Activated B cell treated with CpG ODN at 0.5 μM for 24 hours (primary cell): ENCODE measurements at regions of chr9 and their contacts with region 1.

Region 1: DNA sequence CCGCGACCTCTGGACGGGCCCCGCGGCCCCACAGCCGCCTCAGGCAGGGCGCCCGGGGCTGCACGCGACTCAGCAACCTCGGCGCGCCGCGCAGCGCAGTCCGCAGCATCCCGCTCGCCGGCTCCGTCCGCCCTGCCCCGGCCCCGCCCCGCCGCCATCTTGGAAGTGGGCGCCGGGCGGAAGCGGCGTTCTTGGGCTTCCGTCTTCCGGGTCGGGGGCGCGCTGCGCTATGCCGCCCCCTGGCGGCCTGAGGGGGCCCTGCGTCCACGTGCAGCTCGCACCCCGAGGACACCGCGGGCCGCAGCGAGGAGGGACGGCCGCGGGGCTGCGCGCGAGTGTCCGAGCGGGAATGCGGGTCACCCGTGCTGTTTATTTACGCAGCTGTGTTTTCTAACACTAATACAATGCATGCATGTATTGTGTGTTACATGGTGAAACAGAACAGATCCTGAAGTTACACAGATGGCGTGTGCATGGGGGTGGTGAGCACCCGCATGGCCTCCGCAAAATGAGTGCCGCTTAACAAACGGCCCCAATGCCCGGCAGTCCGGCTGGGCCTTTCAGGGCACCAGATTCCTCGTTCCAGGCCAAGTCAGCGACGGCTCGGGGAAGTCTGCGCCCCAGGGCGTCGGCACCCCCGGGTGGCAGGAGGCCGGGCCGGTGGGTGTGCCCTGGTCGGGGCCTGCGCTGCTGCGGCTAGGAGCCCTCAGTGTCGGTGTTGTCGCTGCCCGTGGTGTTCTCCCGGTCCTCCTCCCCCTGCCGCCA is at the start of gene DNLZ:
- DNase-seq: peak; percentile 90
- ATAC-seq: peak; percentile 69
- H3K4me3 Mint-ChIP-seq: peak within 1 kb of the TSS; percentile 86
- H3K27ac Mint-ChIP-seq: peak within 1 kb of the TSS; percentile 87
- H3K4me1 Mint-ChIP-seq: peaks cover 9% of the 10 kb centered on the region
- H3K27me3 Mint-ChIP-seq: no peaks in the 10 kb centered on the region
- CTCF ChIP-seq: peak; percentile 84
- total RNA-seq, gene DNLZ: 27.1 and 28.9 TPM in 2 replicates

Region 2: GRCh38 chr9:135792268-135793128 is 571.3 kb before region 1 on chr9:
- CTCF ChIA-PET with region 1: no interaction called
- POLR2A ChIA-PET with region 1: no interaction called
- intact Hi-C with region 1: no loop called
- DNase-seq: no peak
- ATAC-seq: no peak
- H3K4me3 Mint-ChIP-seq: no peak overlapping the region
- H3K27ac Mint-ChIP-seq: no peak overlapping the region
- H3K4me1 Mint-ChIP-seq: no peaks in the 10 kb centered on the region
- H3K27me3 Mint-ChIP-seq: peaks cover 3% of the 10 kb centered on the region
- CTCF ChIP-seq: no peak

Region 3: GRCh38 chr9:135898634-135899407 is 465.0 kb before region 1 on chr9:
- CTCF ChIA-PET with region 1: no interaction called
- POLR2A ChIA-PET with region 1: no interaction called
- intact Hi-C with region 1: no loop called
- DNase-seq: no peak
- ATAC-seq: no peak
- H3K4me3 Mint-ChIP-seq: no peak overlapping the region
- H3K27ac Mint-ChIP-seq: no peak overlapping the region
- H3K4me1 Mint-ChIP-seq: peaks cover 40% of the 10 kb centered on the region
- H3K27me3 Mint-ChIP-seq: no peaks in the 10 kb centered on the region
- CTCF ChIP-seq: no peak

Region 4: GRCh38 chr9:136118320-136119060 is 245.3 kb before region 1 on chr9 and contains the start of gene TMEM250:
- CTCF ChIA-PET with region 1: interaction called, 3 read pairs
- POLR2A ChIA-PET with region 1: interaction called, 7 read pairs
- intact Hi-C with region 1: loop called (anchors 1 kb)
- DNase-seq: peak; percentile 96
- ATAC-seq: peak; percentile 89
- H3K4me3 Mint-ChIP-seq: peak within 1 kb of the TSS; percentile 81
- H3K27ac Mint-ChIP-seq: peak within 1 kb of the TSS; percentile 74
- H3K4me1 Mint-ChIP-seq: peaks cover 7% of the 10 kb centered on the region
- H3K27me3 Mint-ChIP-seq: no peaks in the 10 kb centered on the region
- CTCF ChIP-seq: no peak
- total RNA-seq, gene TMEM250: 23.3 and 23.4 TPM in 2 replicates

Region 5: DNA sequence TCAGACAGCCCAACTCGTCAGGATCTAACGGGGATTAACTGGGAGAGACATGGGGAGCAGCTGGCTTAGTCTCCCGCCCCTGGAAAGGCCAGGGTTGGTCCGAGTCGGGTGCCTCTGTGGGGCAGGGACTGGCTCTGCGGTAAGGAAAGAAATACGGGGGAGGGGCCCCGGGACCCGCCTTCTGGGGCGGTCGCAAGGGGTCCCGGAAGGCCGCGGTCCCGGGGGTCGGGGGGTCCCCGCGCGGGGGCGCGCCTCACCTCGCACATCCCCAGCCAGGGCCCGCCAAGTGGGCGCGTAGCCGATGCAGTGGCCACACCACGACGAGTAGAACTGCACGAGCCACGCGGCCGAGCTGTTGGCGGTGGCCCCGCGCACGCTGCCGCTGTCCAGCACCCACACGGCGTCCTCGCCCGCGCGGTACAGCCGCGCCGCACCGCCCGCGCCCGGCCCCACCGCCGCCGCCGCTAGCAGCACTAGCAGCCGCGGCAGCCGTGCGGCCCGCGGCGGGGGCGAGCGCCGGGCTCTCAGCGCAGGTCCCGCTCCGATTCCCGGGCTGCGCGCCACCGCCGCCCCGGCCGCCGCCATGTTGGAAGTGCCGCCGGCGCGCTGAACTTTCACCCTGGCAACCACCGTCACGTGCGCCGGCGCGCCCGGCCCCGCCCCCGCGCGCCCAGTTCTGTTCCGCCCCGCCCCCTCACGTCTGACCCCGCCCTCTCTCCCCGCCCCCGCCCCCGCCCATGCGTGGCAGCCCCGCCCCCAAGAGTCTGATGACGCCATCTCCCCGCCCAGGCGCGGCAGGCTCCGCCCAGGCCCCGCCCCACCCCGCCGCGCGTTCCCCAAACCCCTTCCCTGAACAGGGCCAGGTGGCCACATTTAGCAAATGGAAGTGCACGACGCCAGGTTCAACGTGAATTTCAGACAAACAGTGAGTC is 118.3 kb before region 1 on chr9 and contains the start of gene QSOX2:
- CTCF ChIA-PET with region 1: no interaction called
- POLR2A ChIA-PET with region 1: interaction called, 3 read pairs
- intact Hi-C with region 1: loop called (anchors 1 kb)
- DNase-seq: peak; percentile 83
- ATAC-seq: peak; percentile 70
- H3K4me3 Mint-ChIP-seq: peak within 1 kb of the TSS; percentile 95
- H3K27ac Mint-ChIP-seq: peak within 1 kb of the TSS; percentile 92
- H3K4me1 Mint-ChIP-seq: peaks cover 52% of the 10 kb centered on the region
- H3K27me3 Mint-ChIP-seq: no peaks in the 10 kb centered on the region
- CTCF ChIP-seq: no peak
- total RNA-seq, gene QSOX2: 43.3 and 49.1 TPM in 2 replicates

Region 6: GRCh38 chr9:136327313-136327974 is 36.3 kb before region 1 on chr9 and contains the start of gene GPSM1:
- CTCF ChIA-PET with region 1: no interaction called
- POLR2A ChIA-PET with region 1: interaction called, 3 read pairs
- intact Hi-C with region 1: loop called (anchors 5 kb)
- DNase-seq: no peak
- ATAC-seq: peak; percentile 43
- H3K4me3 Mint-ChIP-seq: peak within 1 kb of the TSS; percentile 61
- H3K27ac Mint-ChIP-seq: no peak within 1 kb of the TSS
- H3K4me1 Mint-ChIP-seq: peaks cover 11% of the 10 kb centered on the region
- H3K27me3 Mint-ChIP-seq: peaks cover 16% of the 10 kb centered on the region
- CTCF ChIP-seq: no peak
- total RNA-seq, gene GPSM1: 1.9 and 2.6 TPM in 2 replicates

Region 7: GRCh38 chr9:136400038-136400834 is 36.4 kb after region 1 on chr9 and contains the start of gene SNAPC4:
- CTCF ChIA-PET with region 1: interaction called, 8 read pairs
- POLR2A ChIA-PET with region 1: interaction called, 14 read pairs
- intact Hi-C with region 1: loop called (anchors 1 kb)
- DNase-seq: peak; percentile 88
- ATAC-seq: peak; percentile 76
- H3K4me3 Mint-ChIP-seq: peak within 1 kb of the TSS; percentile 87
- H3K27ac Mint-ChIP-seq: peak within 1 kb of the TSS; percentile 46
- H3K4me1 Mint-ChIP-seq: peaks cover 48% of the 10 kb centered on the region
- H3K27me3 Mint-ChIP-seq: no peaks in the 10 kb centered on the region
- CTCF ChIP-seq: peak; percentile 21
- total RNA-seq, gene SNAPC4: 20.0 and 22.2 TPM in 2 replicates

Region 8: DNA sequence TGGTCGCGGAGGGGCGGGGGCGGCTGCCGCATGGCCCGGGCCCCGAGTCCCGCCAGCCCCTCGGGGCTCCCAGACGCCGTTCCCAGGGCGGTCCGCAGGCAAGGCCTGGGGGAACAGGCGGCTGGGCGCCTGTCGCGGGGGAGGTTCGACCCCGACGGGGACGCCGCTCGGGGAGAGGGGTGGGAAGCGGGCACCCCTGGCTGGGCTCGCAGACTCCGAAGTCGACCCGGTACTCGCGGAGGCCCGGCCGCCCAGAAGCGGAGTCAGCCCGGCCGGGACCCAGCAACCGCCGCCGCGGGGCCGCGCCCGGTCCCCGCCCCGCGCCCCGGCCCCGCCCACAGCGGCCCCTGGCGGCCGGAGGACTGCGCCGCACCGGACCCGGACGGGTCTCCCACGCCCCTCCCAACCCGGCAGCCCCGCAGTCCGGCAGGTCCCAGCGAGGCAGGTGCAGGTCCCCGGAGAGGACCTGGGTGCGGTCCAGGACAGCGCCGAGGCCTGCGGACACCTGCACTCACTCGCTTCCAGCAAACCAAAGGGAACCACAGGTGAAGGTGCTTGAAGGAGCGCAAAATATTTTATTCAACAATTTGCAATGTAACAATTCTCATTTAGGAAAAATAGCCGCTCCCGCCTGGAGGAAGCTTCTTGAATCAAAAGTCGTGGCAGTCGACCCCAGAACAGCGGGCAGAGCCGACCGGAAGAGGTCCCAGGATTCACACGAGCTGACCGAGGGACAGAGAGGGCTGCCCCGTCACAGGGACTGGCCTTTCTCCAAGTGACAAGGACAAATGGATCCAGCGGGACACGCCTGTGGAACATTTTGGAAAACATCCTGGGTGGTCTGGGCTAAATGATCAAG is 76.0 kb after region 1 on chr9 and contains the start of gene INPP5E:
- CTCF ChIA-PET with region 1: no interaction called
- POLR2A ChIA-PET with region 1: interaction called, 5 read pairs
- intact Hi-C with region 1: loop called (anchors 2 kb)
- DNase-seq: peak; percentile 99
- ATAC-seq: peak; percentile 82
- H3K4me3 Mint-ChIP-seq: peak within 1 kb of the TSS; percentile 84
- H3K27ac Mint-ChIP-seq: peak within 1 kb of the TSS; percentile 53
- H3K4me1 Mint-ChIP-seq: peaks cover 26% of the 10 kb centered on the region
- H3K27me3 Mint-ChIP-seq: no peaks in the 10 kb centered on the region
- CTCF ChIP-seq: no peak
- total RNA-seq, gene INPP5E: 22.8 and 26.6 TPM in 2 replicates

Region 9: DNA sequence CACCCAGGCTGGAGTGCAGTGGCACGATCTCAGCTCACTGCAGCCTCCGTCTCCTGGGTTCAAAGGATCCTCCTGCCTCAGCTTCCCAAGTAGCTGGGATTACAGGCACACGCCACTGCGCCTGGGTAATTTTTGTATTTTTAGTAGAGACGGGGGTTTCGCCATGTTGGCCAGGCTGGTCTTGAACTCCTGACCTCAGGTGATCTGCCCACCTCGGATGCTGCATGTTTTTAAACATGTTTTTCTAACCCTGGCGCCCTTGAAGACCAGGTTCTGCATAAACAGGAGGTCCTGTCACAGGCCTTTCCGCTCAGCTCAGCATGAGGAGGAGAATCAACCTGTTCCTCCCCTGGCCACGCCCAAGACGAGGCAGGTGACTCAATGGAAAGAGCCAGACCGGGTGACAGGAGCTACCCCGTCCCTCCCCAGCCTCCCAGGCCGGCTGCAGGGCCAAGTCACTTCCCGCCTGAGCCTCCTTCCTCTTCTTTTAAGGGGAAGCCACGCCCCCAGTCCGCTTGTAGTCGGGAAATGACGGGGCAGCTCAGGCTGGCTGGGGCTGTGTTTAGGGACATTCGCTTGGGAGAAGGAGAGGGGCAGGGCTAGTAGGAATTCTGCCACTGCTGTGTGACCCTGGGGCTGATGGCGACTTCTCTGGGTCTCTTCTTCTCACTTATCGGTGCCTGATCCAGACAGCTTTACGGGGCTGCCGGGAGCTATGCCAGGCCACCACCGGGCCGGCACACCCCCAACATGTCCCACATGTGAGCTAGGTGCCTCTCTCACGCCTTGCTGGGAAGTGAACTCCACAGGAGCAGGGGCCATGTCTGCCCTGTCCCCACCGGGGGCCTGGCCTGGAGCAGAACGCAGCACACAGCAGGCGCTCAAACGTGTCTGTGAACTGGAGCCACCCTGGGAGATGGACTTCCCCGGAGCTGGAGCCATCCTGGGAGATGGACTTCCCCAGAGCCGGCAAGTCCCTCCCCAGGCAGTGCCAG is 175.9 kb after region 1 on chr9:
- CTCF ChIA-PET with region 1: no interaction called
- POLR2A ChIA-PET with region 1: no interaction called
- intact Hi-C with region 1: loop called (anchors 2 kb)
- DNase-seq: peak; percentile 66
- ATAC-seq: peak; percentile 72
- H3K4me3 Mint-ChIP-seq: peak overlapping the region; percentile 76
- H3K27ac Mint-ChIP-seq: peak overlapping the region; percentile 91
- H3K4me1 Mint-ChIP-seq: peaks cover 71% of the 10 kb centered on the region
- H3K27me3 Mint-ChIP-seq: no peaks in the 10 kb centered on the region
- CTCF ChIP-seq: no peak